Endothelial cell of umbilical vein (primary cell): ENCODE measurements at regions of chr6 and their contacts with region 1.

Region 1: GRCh38 chr6:96897383-96898240 is at the start of gene NDUFAF4:
- DNase-seq: peak; percentile 96
- H3K4me3 ChIP-seq: peak within 1 kb of the TSS; percentile 79 to 99 (median 91)
- H3K27ac ChIP-seq: peak within 1 kb of the TSS; percentile 95
- H3K4me1 ChIP-seq: peaks cover 25% of the 10 kb centered on the region
- H3K27me3 ChIP-seq: peaks cover 0 to 2% of the 10 kb centered on the region in 2 experiments
- CTCF ChIP-seq: peak; percentile 94 to 97
- POLR2A ChIP-seq: no peak
- total RNA-seq, gene NDUFAF4: 39.8 and 44.6 TPM in 2 replicates

Region 2: GRCh38 chr6:96521644-96522464 is 375.8 kb before region 1 on chr6 and contains the start of gene UFL1:
- CTCF ChIA-PET with region 1: interaction called, 3 read pairs
- POLR2A ChIA-PET with region 1: no interaction called
- dilution Hi-C with region 1: no loop called
- intact Hi-C with region 1: loop called (anchors 1 kb)
- DNase-seq: peak; percentile 95
- H3K4me3 ChIP-seq: peak within 1 kb of the TSS; percentile 63 to 99 (median 98)
- H3K27ac ChIP-seq: peak within 1 kb of the TSS; percentile 92
- H3K4me1 ChIP-seq: peaks cover 16% of the 10 kb centered on the region
- H3K27me3 ChIP-seq: no peaks in the 10 kb centered on the region
- CTCF ChIP-seq: no peak
- POLR2A ChIP-seq: peak; percentile 98
- total RNA-seq, gene UFL1: 18.3 and 19.6 TPM in 2 replicates

Region 3: DNA sequence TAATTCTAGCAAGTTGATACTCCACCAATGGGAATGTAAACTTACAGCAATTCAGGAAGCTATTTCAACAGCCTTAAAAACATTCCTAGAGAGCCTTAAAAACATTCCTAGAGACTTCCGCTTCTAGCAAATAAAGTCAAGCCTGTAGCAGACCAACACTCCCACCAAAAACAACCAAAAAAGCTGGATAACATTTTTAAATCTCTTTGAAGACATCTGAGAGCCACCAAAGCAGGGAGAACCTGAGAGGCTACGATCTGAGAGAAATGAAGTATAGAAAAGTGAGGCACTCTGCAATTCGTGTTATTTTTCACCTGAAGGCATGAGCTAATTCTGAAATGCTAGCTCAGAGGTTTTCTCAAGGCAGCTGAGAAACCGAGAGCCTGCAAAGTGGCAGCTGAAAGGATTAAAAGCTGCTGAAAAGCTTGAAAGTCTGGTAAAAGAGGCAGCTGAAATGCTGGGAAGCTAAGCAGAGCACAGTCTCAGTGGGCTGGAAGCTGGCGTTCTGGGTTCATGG is 81.3 kb before region 1 on chr6:
- CTCF ChIA-PET with region 1: no interaction called
- POLR2A ChIA-PET with region 1: no interaction called
- dilution Hi-C with region 1: no loop called
- intact Hi-C with region 1: no loop called
- DNase-seq: no peak
- H3K4me3 ChIP-seq: no peak overlapping the region
- H3K27ac ChIP-seq: no peak overlapping the region
- H3K4me1 ChIP-seq: no peaks in the 10 kb centered on the region
- H3K27me3 ChIP-seq: no peaks in the 10 kb centered on the region
- CTCF ChIP-seq: no peak
- POLR2A ChIP-seq: no peak

Region 4: GRCh38 chr6:96837081-96837971 is 60.3 kb before region 1 on chr6 and contains the start of gene GPR63:
- CTCF ChIA-PET with region 1: interaction called, 4 read pairs
- POLR2A ChIA-PET with region 1: no interaction called
- dilution Hi-C with region 1: no loop called
- intact Hi-C with region 1: loop called (anchors 2 kb)
- DNase-seq: peak; percentile 24
- H3K4me3 ChIP-seq: peak within 1 kb of the TSS; percentile 51 to 85 (median 64)
- H3K27ac ChIP-seq: no peak within 1 kb of the TSS
- H3K4me1 ChIP-seq: peaks cover 10% of the 10 kb centered on the region
- H3K27me3 ChIP-seq: peaks cover 19 to 65% of the 10 kb centered on the region in 2 experiments
- CTCF ChIP-seq: no peak
- POLR2A ChIP-seq: no peak
- total RNA-seq, gene GPR63: 0.09 and 0.13 TPM in 2 replicates

Region 5: GRCh38 chr6:96864216-96865054 is 33.2 kb before region 1 on chr6:
- CTCF ChIA-PET with region 1: no interaction called
- POLR2A ChIA-PET with region 1: no interaction called
- dilution Hi-C with region 1: no loop called
- intact Hi-C with region 1: no loop called
- DNase-seq: no peak
- H3K4me3 ChIP-seq: no peak overlapping the region
- H3K27ac ChIP-seq: no peak overlapping the region
- H3K4me1 ChIP-seq: no peaks in the 10 kb centered on the region
- H3K27me3 ChIP-seq: peaks cover 2 to 8% of the 10 kb centered on the region in 2 experiments
- CTCF ChIP-seq: no peak
- POLR2A ChIP-seq: no peak

Region 6: GRCh38 chr6:97053643-97054411 is 156.2 kb after region 1 on chr6:
- CTCF ChIA-PET with region 1: interaction called, 106 read pairs
- POLR2A ChIA-PET with region 1: no interaction called
- dilution Hi-C with region 1: no loop called
- intact Hi-C with region 1: loop called (anchors 1 kb)
- DNase-seq: peak; percentile 29
- H3K4me3 ChIP-seq: no peak overlapping the region
- H3K27ac ChIP-seq: no peak overlapping the region
- H3K4me1 ChIP-seq: no peaks in the 10 kb centered on the region
- H3K27me3 ChIP-seq: peaks cover 6 to 17% of the 10 kb centered on the region in 2 experiments
- CTCF ChIP-seq: peak; percentile 5 to 15
- POLR2A ChIP-seq: no peak

Region 7: GRCh38 chr6:97186416-97186999 is 288.9 kb after region 1 on chr6:
- CTCF ChIA-PET with region 1: no interaction called
- POLR2A ChIA-PET with region 1: no interaction called
- dilution Hi-C with region 1: no loop called
- intact Hi-C with region 1: loop called (anchors 5 kb)
- DNase-seq: peak; percentile 77
- H3K4me3 ChIP-seq: no peak overlapping the region
- H3K27ac ChIP-seq: no peak overlapping the region
- H3K4me1 ChIP-seq: peaks cover 32% of the 10 kb centered on the region
- H3K27me3 ChIP-seq: no peaks in the 10 kb centered on the region
- CTCF ChIP-seq: peak; percentile 77 to 85
- POLR2A ChIP-seq: no peak

Region 8: DNA sequence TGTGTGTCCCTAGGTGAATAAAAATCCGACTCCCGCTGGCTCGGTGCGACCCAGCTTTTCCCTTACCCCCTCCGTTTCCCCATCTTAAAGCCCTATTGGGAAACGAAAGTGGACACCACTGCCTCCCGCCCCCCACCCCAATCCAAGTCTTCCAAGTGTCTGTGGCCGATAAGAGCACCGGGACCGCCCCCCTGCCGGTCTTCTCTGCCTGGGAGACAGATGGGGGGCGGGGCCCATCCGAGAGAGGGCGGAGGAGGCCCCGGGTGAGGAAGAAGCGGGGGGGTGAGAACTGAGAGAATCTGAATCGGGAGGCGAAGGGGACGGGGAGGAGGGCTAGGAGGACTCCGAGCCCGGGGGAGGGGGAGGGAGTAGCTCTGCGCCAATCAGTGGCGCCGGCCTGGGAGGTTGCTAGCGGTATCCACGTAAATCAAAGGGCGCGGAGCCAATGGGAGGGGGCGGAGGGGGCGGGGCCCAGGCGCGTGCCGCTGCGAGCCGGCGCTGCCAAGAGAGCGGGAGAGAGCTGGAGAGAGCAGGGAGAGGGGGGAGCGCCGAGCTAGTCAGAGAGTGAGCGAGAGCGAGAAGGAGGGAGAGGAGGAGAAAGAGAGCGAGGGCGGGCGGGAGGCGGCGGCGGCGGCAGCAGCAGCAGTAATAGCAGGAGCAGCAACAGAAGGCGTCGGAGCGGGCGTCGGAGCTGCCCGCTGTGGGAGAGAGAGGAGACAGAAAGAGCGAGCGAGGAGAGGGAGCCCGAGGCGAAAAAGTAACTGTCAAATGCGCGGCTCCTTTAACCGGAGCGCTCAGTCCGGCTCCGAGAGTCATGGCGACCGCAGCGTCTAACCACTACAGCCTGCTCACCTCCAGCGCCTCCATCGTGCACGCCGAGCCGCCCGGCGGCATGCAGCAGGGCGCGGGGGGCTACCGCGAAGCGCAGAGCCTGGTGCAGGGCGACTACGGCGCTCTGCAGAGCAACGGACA is 1936.7 kb after region 1 on chr6 and contains the start of gene POU3F2:
- CTCF ChIA-PET with region 1: no interaction called
- POLR2A ChIA-PET with region 1: no interaction called
- dilution Hi-C with region 1: no loop called
- intact Hi-C with region 1: loop called (anchors 2 kb)
- DNase-seq: peak; percentile 90
- H3K4me3 ChIP-seq: peak within 1 kb of the TSS; percentile 8 to 40 (median 34)
- H3K27ac ChIP-seq: no peak within 1 kb of the TSS
- H3K4me1 ChIP-seq: peaks cover 9% of the 10 kb centered on the region
- H3K27me3 ChIP-seq: peaks cover 74 to 94% of the 10 kb centered on the region in 2 experiments
- CTCF ChIP-seq: no peak
- POLR2A ChIP-seq: no peak
- total RNA-seq, gene POU3F2: not detected in 2 replicates